Heart left ventricle (tissue), 16 donors: ENCODE measurements at regions of chr1 and their contacts with region 1.

Region 1: DNA sequence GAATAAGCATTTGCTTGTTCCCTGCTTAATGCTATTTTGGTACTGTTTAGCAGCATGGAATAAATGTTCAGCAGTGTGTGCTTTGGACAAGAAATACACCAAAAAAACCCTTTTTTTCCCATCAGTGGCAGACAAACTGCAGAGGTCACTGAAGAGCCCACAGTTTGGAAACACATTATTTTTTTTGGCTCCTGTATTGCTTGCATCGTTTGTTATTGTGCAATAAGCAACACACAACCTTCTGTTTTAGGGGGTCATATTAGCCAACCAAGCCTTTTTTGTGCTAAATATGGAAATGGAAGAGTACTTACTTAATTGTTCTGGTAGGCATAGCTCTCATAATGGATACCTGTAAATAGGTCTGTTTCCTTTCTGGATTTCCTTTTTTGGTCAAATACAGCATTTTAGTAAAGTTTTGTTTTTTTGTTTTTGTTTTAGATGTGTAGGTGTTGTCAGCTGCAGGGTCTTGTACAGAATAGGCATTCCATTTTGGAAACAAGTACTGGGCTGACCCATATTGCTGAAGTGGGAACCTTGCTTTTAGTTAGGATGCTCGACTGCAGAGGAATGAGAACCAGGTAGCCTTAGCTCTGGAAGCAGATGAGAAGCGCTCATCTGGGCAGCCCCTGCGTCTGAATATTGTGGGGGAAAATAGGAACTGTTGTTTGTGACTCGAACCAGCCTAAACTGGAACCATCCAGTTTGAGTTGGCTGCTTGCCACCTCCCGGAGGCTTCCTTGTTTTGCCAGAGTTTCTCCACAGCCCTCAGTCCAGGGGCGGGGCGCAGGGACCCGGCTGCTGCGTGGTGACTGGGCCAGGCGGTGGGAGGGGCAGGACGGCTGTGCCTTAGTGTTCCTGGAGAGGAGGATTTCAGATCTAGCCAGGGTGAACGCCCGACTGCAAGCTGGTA is 38.4 kb downstream of the SPEN start:
- DNase-seq: peak; percentile 96 to 99 (median 97)
- ATAC-seq: peak; percentile 98 to 99 (median 98)
- H3K4me3 ChIP-seq: peak overlapping the region in 11 of 12 donors; percentile 17 to 57 (median 49)
- H3K27ac ChIP-seq: peak overlapping the region; percentile 74 to 97 (median 88)
- H3K4me1 ChIP-seq: peaks cover 0 to 65% (median 38%) of the 10 kb centered on the region in 12 donors
- H3K27me3 ChIP-seq: no peaks in the 10 kb centered on the region
- CTCF ChIP-seq: peak in 5 of 12 donors; percentile 9 to 44 (median 34)
- POLR2A ChIP-seq: peak in 1 of 2 donors; percentile 66

Region 2: GRCh38 chr1:15847100-15847892 is 38.7 kb before region 1 on chr1 and contains the start of gene SPEN:
- intact Hi-C with region 1: loop called in 9 of 10 experiments (anchors 2 to 5 kb)
- DNase-seq: peak; percentile 98 to 100 (median 99)
- ATAC-seq: peak; percentile 68 to 96 (median 90)
- H3K4me3 ChIP-seq: peak within 1 kb of the TSS; percentile 49 to 97 (median 82)
- H3K27ac ChIP-seq: peak within 1 kb of the TSS; percentile 86 to 99 (median 95)
- H3K4me1 ChIP-seq: peaks cover 11 to 57% (median 41%) of the 10 kb centered on the region in 12 donors
- H3K27me3 ChIP-seq: no peaks in the 10 kb centered on the region
- CTCF ChIP-seq: peak in 2 of 12 donors; percentile 12 to 17
- POLR2A ChIP-seq: peak; percentile 20 to 88
- total RNA-seq, gene SPEN: 18.3 to 41.5 (median 31.3) TPM

Region 3: GRCh38 chr1:15856888-15857287 is 29.1 kb before region 1 on chr1:
- intact Hi-C with region 1: loop called in 3 of 10 experiments (anchors 2 to 5 kb)
- DNase-seq: no peak
- ATAC-seq: no peak
- H3K4me3 ChIP-seq: no peak overlapping the region
- H3K27ac ChIP-seq: no peak overlapping the region
- H3K4me1 ChIP-seq: peaks cover 5 to 64% (median 45%) of the 10 kb centered on the region in 12 donors
- H3K27me3 ChIP-seq: no peaks in the 10 kb centered on the region
- CTCF ChIP-seq: no peak
- POLR2A ChIP-seq: no peak

Region 4: DNA sequence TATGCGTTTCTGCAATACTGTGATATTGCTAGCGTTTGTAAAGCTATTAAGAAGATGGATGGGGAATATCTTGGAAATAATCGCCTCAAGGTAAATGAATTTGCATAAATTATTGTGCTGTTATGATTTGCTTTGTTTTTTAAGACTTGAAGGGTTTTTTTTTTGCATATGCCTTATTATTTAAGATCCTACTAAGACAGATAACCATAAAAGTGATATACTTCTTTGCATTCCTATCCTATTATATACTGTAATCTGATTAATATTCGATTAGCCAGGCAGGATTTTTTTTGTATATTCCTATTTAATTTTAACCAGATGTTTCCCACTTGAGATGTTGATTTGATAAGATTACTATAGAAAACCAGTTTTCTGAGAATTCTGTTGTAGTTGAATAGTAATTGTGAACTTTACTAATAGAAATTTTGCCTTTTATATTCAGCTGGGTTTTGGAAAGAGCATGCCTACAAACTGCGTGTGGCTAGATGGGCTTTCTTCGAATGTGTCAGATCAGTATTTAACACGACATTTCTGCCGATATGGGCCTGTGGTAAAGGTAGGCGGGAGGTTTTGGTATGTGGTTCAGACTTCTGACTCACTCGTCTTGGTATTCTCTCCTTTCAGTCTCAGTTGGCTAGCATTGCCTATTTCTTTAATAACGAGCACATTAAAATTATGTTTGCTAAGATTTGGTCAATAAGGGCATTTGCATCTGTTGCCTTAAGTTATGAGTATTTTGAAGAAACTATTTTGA is 33.2 kb after region 1 on chr1:
- intact Hi-C with region 1: no loop called
- DNase-seq: no peak
- ATAC-seq: no peak
- H3K4me3 ChIP-seq: no peak overlapping the region
- H3K27ac ChIP-seq: no peak overlapping the region
- H3K4me1 ChIP-seq: peaks cover 0 to 23% (median 1%) of the 10 kb centered on the region in 12 donors
- H3K27me3 ChIP-seq: no peaks in the 10 kb centered on the region
- CTCF ChIP-seq: no peak
- POLR2A ChIP-seq: no peak

Region 5: GRCh38 chr1:15966081-15966955 is 80.4 kb after region 1 on chr1:
- intact Hi-C with region 1: no loop called
- DNase-seq: no peak
- ATAC-seq: peak in 3 of 4 donors; percentile 11 to 60 (median 56)
- H3K4me3 ChIP-seq: peak overlapping the region in 2 of 12 donors; percentile 0 to 1
- H3K27ac ChIP-seq: peak overlapping the region in 10 of 12 donors; percentile 6 to 85 (median 48)
- H3K4me1 ChIP-seq: peaks cover 0 to 55% (median 21%) of the 10 kb centered on the region in 12 donors
- H3K27me3 ChIP-seq: no peaks in the 10 kb centered on the region
- CTCF ChIP-seq: no peak
- POLR2A ChIP-seq: no peak